ENCODE measurements at regions of chr18 and their contacts with region 1.

Region 1: GRCh38 chr18:50266248-50266704 is at the start of gene CFAP53:
- DNase-seq: peak; percentile 89
- H3K4me3 Mint-ChIP-seq: peak within 1 kb of the TSS; percentile 76
- H3K27ac Mint-ChIP-seq: peak within 1 kb of the TSS; percentile 56
- H3K4me1 Mint-ChIP-seq: peaks cover 31% of the 10 kb centered on the region
- H3K27me3 Mint-ChIP-seq: no peaks in the 10 kb centered on the region
- total RNA-seq, gene CFAP53: 0.50 to 0.83 TPM

Region 2: DNA sequence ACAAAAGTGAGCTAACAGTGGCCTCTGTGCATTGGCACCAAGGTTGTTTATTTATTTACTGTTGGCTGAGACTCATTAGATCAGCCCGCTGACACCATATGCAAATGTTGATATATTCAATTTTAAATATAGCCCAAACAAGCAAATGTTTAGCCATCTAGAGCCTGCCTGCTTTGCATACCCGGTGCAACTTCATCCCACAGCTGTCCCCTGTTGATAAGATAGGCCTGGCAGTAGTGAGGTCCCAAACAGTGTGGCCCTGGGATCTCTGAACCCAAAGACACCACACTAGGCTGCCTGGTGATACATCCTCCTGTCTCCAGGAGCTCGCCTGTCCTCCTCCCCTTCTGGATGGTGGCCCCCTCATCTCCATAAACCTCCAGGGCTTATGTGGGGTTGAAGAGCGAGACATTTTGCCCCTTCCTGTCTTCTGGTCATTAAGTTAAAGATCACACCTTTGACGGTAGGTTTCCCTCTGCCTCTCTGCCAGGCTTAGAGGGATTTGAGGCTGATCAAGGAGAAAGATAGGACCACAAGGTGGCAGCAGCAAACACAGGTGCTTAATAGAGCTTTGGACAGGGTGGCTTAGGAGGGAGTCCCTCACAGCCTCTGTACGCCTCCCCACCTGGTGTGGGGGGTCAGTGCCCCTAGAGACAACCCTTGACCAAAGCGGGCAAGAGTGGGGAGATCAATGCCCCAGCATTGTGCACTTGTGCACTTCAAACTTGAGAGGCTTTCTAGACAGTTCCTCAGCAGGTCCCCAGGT is 47.7 kb before region 1 on chr18:
- CTCF ChIA-PET with region 1: interaction called, 13 read pairs
- POLR2A ChIA-PET with region 1: no interaction called
- DNase-seq: peak; percentile 46
- H3K4me3 Mint-ChIP-seq: no peak overlapping the region
- H3K27ac Mint-ChIP-seq: no peak overlapping the region
- H3K4me1 Mint-ChIP-seq: no peaks in the 10 kb centered on the region
- H3K27me3 Mint-ChIP-seq: peaks cover 39% of the 10 kb centered on the region

Region 3: GRCh38 chr18:50231621-50232020 is 34.7 kb before region 1 on chr18:
- CTCF ChIA-PET with region 1: no interaction called
- POLR2A ChIA-PET with region 1: no interaction called
- DNase-seq: no peak
- H3K4me3 Mint-ChIP-seq: no peak overlapping the region
- H3K27ac Mint-ChIP-seq: no peak overlapping the region
- H3K4me1 Mint-ChIP-seq: peaks cover 9% of the 10 kb centered on the region
- H3K27me3 Mint-ChIP-seq: peaks cover 11% of the 10 kb centered on the region

Region 4: GRCh38 chr18:50281295-50281971 is 15.2 kb after region 1 on chr18 and contains the start of gene MBD1:
- CTCF ChIA-PET with region 1: interaction called, 13 read pairs
- POLR2A ChIA-PET with region 1: interaction called, 22 read pairs
- DNase-seq: peak; percentile 96
- H3K4me3 Mint-ChIP-seq: peak within 1 kb of the TSS; percentile 88
- H3K27ac Mint-ChIP-seq: peak within 1 kb of the TSS; percentile 89
- H3K4me1 Mint-ChIP-seq: peaks cover 74% of the 10 kb centered on the region
- H3K27me3 Mint-ChIP-seq: no peaks in the 10 kb centered on the region
- total RNA-seq, gene MBD1: 103 to 106 TPM

Region 5: GRCh38 chr18:50341443-50341842 is 75.2 kb after region 1 on chr18:
- CTCF ChIA-PET with region 1: no interaction called
- POLR2A ChIA-PET with region 1: no interaction called
- DNase-seq: no peak
- H3K4me3 Mint-ChIP-seq: no peak overlapping the region
- H3K27ac Mint-ChIP-seq: no peak overlapping the region
- H3K4me1 Mint-ChIP-seq: no peaks in the 10 kb centered on the region
- H3K27me3 Mint-ChIP-seq: peaks cover 2% of the 10 kb centered on the region